ENCODE measurements at regions of chr5 and their contacts with region 1.

Region 1: DNA sequence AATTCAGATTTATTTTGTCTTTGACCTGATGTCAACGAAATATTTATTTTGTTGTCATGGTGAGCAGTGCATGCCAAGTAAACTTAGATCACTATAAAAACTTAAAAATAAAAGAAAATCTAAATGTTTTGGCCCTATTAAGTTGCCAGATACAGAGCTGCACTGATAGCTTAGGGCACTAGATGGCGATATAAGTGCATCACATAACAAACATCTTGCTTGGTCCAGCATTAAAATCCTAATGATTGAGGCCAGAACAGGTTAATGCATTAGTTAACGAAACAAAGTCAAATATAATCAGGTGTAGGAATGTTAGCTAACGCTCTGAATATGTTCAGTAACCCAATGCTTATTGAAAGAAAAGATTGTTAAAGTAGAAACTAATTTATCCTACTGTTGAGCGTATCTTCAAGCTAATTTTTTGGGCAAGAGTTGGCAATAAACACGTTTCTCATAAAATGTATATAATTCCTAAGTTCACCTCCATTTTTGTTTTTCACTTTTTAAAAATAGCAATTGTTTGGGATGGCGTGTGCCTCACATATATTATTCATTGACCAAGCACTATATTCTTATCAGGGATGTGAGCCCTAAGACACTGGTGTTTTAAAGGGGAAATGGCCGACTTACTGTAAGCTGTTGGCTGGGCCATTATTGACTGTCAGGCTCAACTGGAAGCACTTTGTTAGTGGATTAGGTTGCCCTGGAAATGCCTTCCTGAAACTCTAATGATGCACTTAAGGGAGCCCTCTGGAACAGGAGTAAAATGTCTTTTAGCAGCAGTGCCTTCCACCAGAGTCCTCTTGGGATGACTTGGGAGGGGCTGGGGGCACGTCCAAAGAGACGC is 33.3 kb downstream of the KCTD16 start:
- DNase-seq: peak; percentile 32

Region 2: GRCh38 chr5:144028636-144029035 is 175.3 kb before region 1 on chr5:
- CTCF ChIA-PET with region 1: no interaction called
- POLR2A ChIA-PET with region 1: no interaction called
- DNase-seq: no peak

Region 3: GRCh38 chr5:144191998-144192397 is 12.0 kb before region 1 on chr5:
- CTCF ChIA-PET with region 1: interaction called, 19 read pairs
- POLR2A ChIA-PET with region 1: no interaction called
- DNase-seq: peak; percentile 25

Region 4: GRCh38 chr5:145237843-145238242 is 1033.9 kb after region 1 on chr5:
- CTCF ChIA-PET with region 1: interaction called, 14 read pairs
- POLR2A ChIA-PET with region 1: no interaction called
- DNase-seq: peak; percentile 45

Measured in HEK293T (cell line).